Naive thymus-derived CD4-positive, alpha-beta T cell (primary cell): ENCODE measurements at regions of chr7 and their contacts with region 1.

Region 1: GRCh38 chr7:19610194-19610943 is 98.5 kb downstream of the POLR1F start:
- DNase-seq: no peak
- ATAC-seq: no peak
- H3K4me3 ChIP-seq: no peak overlapping the region
- H3K4me3 Mint-ChIP-seq: no peak overlapping the region
- H3K27ac ChIP-seq: no peak overlapping the region
- H3K27ac Mint-ChIP-seq: no peak overlapping the region
- H3K4me1 ChIP-seq: no peaks in the 10 kb centered on the region
- H3K4me1 Mint-ChIP-seq: no peaks in the 10 kb centered on the region
- H3K27me3 ChIP-seq: no peaks in the 10 kb centered on the region
- H3K27me3 Mint-ChIP-seq: no peaks in the 10 kb centered on the region

Region 2: GRCh38 chr7:19585761-19586160 is 24.6 kb before region 1 on chr7:
- CTCF ChIA-PET with region 1: no interaction called
- POLR2A ChIA-PET with region 1: no interaction called
- intact Hi-C with region 1: loop called in 1 of 2 experiments (anchors 1 kb)
- DNase-seq: no peak
- ATAC-seq: no peak
- H3K4me3 ChIP-seq: no peak overlapping the region
- H3K4me3 Mint-ChIP-seq: no peak overlapping the region
- H3K27ac ChIP-seq: no peak overlapping the region
- H3K27ac Mint-ChIP-seq: no peak overlapping the region
- H3K4me1 ChIP-seq: no peaks in the 10 kb centered on the region
- H3K4me1 Mint-ChIP-seq: no peaks in the 10 kb centered on the region
- H3K27me3 ChIP-seq: no peaks in the 10 kb centered on the region
- H3K27me3 Mint-ChIP-seq: no peaks in the 10 kb centered on the region

Region 3: DNA sequence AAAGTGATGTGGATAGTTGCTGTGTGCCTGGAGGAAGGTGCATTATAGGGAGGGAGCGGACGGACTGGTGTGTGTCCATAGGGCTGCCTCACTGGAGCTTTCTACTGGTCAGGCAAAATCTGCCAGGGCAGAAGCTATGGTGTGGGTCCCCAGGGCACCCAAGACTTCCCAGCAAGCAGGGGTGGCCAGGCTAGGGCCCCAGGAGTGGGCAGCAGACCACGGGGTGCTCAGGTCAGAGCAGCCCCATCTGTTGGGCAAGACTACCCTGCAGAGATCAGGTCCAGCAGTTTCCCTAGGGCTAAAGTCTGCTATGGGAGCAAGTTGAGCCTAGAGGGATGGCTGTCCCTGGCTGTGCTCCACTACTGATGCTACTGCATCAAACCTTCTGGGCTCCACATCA is 14.6 kb before region 1 on chr7:
- CTCF ChIA-PET with region 1: no interaction called
- POLR2A ChIA-PET with region 1: no interaction called
- intact Hi-C with region 1: loop called in 1 of 2 experiments (anchors 1 kb)
- DNase-seq: no peak
- ATAC-seq: no peak
- H3K4me3 ChIP-seq: no peak overlapping the region
- H3K4me3 Mint-ChIP-seq: no peak overlapping the region
- H3K27ac ChIP-seq: no peak overlapping the region
- H3K27ac Mint-ChIP-seq: no peak overlapping the region
- H3K4me1 ChIP-seq: no peaks in the 10 kb centered on the region
- H3K4me1 Mint-ChIP-seq: no peaks in the 10 kb centered on the region
- H3K27me3 ChIP-seq: no peaks in the 10 kb centered on the region
- H3K27me3 Mint-ChIP-seq: no peaks in the 10 kb centered on the region

Region 4: GRCh38 chr7:19677180-19677579 is 66.8 kb after region 1 on chr7:
- CTCF ChIA-PET with region 1: no interaction called
- POLR2A ChIA-PET with region 1: no interaction called
- intact Hi-C with region 1: no loop called
- DNase-seq: no peak
- ATAC-seq: no peak
- H3K4me3 ChIP-seq: no peak overlapping the region
- H3K4me3 Mint-ChIP-seq: no peak overlapping the region
- H3K27ac ChIP-seq: no peak overlapping the region
- H3K27ac Mint-ChIP-seq: peak overlapping the region in 1 of 9 donors; percentile 51
- H3K4me1 ChIP-seq: no peaks in the 10 kb centered on the region
- H3K4me1 Mint-ChIP-seq: peaks cover 0 to 6% (median 0%) of the 10 kb centered on the region in 7 donors
- H3K27me3 ChIP-seq: no peaks in the 10 kb centered on the region
- H3K27me3 Mint-ChIP-seq: no peaks in the 10 kb centered on the region

Region 5: GRCh38 chr7:21480693-21481403 is 1870.5 kb after region 1 on chr7:
- CTCF ChIA-PET with region 1: no interaction called
- POLR2A ChIA-PET with region 1: no interaction called
- intact Hi-C with region 1: no loop called
- DNase-seq: no peak
- ATAC-seq: no peak
- H3K4me3 ChIP-seq: no peak overlapping the region
- H3K4me3 Mint-ChIP-seq: peak overlapping the region in 2 of 10 donors; percentile 3 to 21
- H3K27ac ChIP-seq: no peak overlapping the region
- H3K27ac Mint-ChIP-seq: peak overlapping the region in 8 of 9 donors; percentile 14 to 74 (median 44)
- H3K4me1 ChIP-seq: peaks cover 0 to 3% of the 10 kb centered on the region in 2 donors
- H3K4me1 Mint-ChIP-seq: peaks cover 27 to 58% (median 41%) of the 10 kb centered on the region in 7 donors
- H3K27me3 ChIP-seq: no peaks in the 10 kb centered on the region
- H3K27me3 Mint-ChIP-seq: no peaks in the 10 kb centered on the region